Calu3 (cell line): ENCODE measurements at regions of chr1 and their contacts with region 1.

Region 1: DNA sequence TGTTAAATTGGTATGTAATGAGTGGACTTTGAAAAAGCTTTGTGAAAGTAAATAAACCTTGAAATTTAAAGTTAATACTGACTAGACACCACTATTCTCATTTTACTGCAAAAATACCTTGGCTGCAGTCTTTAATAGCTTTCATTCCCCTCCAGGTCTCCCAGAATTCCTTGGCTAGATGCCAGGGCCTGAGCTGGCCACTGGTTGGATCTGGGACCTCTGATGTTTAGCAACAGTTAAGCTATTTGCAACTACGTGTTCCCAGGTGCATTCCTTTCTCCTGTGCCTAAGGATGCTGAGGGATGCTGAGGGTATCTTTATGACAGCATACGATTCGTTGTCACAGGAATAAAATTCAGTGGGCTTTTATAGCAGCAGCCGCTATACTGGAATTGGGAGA is 938.7 kb downstream of the TTLL7 start:
- DNase-seq: peak; percentile 65
- H3K4me3 Mint-ChIP-seq: no peak overlapping the region
- H3K27ac Mint-ChIP-seq: no peak overlapping the region
- H3K4me1 Mint-ChIP-seq: peaks cover 77% of the 10 kb centered on the region
- H3K27me3 Mint-ChIP-seq: no peaks in the 10 kb centered on the region
- CTCF ChIP-seq: no peak

Region 2: DNA sequence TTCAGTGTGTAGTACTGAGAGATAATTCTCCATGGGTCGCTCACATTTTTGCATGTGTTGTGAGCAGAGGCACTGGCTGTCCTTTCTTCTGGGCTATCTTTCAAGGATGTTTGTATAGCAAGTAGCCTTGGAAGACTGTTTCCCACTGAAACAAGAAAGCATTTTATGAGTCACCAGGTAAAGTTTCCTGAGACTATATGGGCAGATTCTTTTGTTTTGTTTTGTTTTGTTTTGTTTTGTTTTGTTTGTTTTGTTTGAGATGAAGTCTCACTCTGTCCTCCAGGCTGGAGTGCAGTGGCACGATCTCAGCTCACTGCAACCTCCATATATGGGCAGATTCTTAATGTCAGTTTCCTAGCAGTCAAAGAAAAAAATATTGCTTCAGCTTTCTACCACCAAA is 26.1 kb after region 1 on chr1:
- CTCF ChIA-PET with region 1: no interaction called
- intact Hi-C with region 1: loop called (anchors 2 kb)
- DNase-seq: no peak
- H3K4me3 Mint-ChIP-seq: peak overlapping the region; percentile 8
- H3K27ac Mint-ChIP-seq: peak overlapping the region; percentile 45
- H3K4me1 Mint-ChIP-seq: peaks cover 11% of the 10 kb centered on the region
- H3K27me3 Mint-ChIP-seq: no peaks in the 10 kb centered on the region
- CTCF ChIP-seq: no peak

Region 3: GRCh38 chr1:83098131-83098530 is 37.9 kb after region 1 on chr1:
- CTCF ChIA-PET with region 1: no interaction called
- intact Hi-C with region 1: loop called (anchors 2 kb)
- DNase-seq: no peak
- H3K4me3 Mint-ChIP-seq: no peak overlapping the region
- H3K27ac Mint-ChIP-seq: peak overlapping the region; percentile 64
- H3K4me1 Mint-ChIP-seq: peaks cover 32% of the 10 kb centered on the region
- H3K27me3 Mint-ChIP-seq: no peaks in the 10 kb centered on the region
- CTCF ChIP-seq: no peak